CD4-positive, alpha-beta memory T cell (primary cell): ENCODE measurements at regions of chr3 and their contacts with region 1.

Region 1: DNA sequence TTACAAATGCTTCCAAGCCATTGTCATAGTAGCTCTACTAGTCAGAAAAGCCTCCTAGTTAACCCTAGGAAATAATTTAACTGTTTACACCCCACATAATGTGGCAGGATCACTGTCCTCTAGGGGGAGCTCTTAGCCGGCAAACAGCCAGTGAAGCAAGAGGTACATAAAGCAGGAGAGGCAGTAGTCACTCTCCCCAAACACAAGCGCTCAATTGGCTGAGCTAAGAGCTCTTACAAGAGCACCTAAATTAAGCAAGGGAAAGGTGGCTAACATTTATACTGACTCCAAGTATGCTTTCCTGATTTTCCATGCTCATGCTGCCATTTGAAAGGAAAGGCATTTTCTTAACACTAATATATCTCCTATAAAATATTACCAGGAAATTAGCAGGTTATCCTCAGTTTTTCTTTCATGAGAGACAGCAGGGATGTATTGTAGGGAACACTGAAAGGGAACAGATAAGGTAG is 37.6 kb downstream of the NCEH1 start:
- DNase-seq: peak in 4 of 5 donors; percentile 40 to 48 (median 44)
- H3K4me3 ChIP-seq: no peak overlapping the region
- H3K4me3 Mint-ChIP-seq: no peak overlapping the region
- H3K27ac ChIP-seq: no peak overlapping the region
- H3K27ac Mint-ChIP-seq: no peak overlapping the region
- H3K4me1 ChIP-seq: no peaks in the 10 kb centered on the region
- H3K4me1 Mint-ChIP-seq: peaks cover 0 to 5% (median 3%) of the 10 kb centered on the region in 4 donors
- H3K27me3 ChIP-seq: no peaks in the 10 kb centered on the region
- H3K27me3 Mint-ChIP-seq: no peaks in the 10 kb centered on the region

Region 2: GRCh38 chr3:172332256-172333041 is 340.8 kb before region 1 on chr3:
- CTCF ChIA-PET with region 1: interaction called, 26 read pairs
- POLR2A ChIA-PET with region 1: no interaction called
- intact Hi-C with region 1: no loop called
- DNase-seq: peak; percentile 40 to 57 (median 47)
- H3K4me3 ChIP-seq: no peak overlapping the region
- H3K4me3 Mint-ChIP-seq: no peak overlapping the region
- H3K27ac ChIP-seq: no peak overlapping the region
- H3K27ac Mint-ChIP-seq: peak overlapping the region in 1 of 7 donors; percentile 15
- H3K4me1 ChIP-seq: no peaks in the 10 kb centered on the region
- H3K4me1 Mint-ChIP-seq: peaks cover 0 to 7% (median 3%) of the 10 kb centered on the region in 4 donors
- H3K27me3 ChIP-seq: no peaks in the 10 kb centered on the region
- H3K27me3 Mint-ChIP-seq: no peaks in the 10 kb centered on the region

Region 3: DNA sequence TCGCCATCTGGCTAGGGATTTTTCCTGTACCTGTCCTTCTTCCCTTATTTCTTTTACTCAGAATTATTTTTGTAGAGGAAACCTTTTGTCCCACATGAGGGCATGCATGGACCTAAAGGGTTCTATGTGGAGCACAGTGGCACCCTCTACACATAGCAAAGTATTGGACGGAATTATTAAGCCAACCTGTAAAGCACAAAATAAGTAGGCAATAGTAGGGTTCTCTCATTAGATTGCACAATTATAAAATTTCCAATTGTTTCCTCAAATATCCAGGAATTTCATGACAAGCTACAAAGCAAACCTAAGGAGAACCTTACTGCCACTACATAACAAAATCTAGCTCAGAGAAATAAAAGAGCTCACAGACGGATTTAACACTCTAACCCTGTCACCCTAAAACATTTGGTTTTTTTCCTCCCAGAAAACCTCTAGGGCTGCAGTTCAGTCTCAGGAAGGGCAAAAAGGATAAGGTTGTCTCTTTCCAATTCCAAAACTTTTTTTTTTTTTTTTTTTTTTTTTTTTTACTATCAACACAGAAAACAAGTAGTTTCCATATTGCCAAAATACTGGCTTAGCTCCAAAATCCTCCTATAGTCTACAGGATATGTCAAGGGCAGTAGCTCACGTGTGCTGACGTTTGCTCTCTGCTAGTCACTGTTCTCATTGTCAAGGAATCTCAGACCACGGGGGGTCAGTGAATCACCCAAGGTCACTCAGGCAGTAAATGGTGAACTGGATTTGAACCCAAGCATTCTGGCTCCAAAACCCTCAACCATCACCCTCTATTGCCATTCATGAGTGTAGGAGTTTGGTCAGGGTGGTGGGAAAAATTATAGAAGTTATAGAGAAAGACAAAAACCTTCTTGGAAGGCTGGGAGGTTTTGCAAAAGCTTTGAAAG is 14.7 kb before region 1 on chr3:
- CTCF ChIA-PET with region 1: interaction called, 63 read pairs
- POLR2A ChIA-PET with region 1: interaction called, 4 read pairs
- intact Hi-C with region 1: no loop called
- DNase-seq: no peak
- H3K4me3 ChIP-seq: no peak overlapping the region
- H3K4me3 Mint-ChIP-seq: no peak overlapping the region
- H3K27ac ChIP-seq: no peak overlapping the region
- H3K27ac Mint-ChIP-seq: peak overlapping the region in 1 of 7 donors; percentile 3
- H3K4me1 ChIP-seq: no peaks in the 10 kb centered on the region
- H3K4me1 Mint-ChIP-seq: peaks cover 12 to 40% (median 23%) of the 10 kb centered on the region in 4 donors
- H3K27me3 ChIP-seq: no peaks in the 10 kb centered on the region
- H3K27me3 Mint-ChIP-seq: no peaks in the 10 kb centered on the region

Region 4: DNA sequence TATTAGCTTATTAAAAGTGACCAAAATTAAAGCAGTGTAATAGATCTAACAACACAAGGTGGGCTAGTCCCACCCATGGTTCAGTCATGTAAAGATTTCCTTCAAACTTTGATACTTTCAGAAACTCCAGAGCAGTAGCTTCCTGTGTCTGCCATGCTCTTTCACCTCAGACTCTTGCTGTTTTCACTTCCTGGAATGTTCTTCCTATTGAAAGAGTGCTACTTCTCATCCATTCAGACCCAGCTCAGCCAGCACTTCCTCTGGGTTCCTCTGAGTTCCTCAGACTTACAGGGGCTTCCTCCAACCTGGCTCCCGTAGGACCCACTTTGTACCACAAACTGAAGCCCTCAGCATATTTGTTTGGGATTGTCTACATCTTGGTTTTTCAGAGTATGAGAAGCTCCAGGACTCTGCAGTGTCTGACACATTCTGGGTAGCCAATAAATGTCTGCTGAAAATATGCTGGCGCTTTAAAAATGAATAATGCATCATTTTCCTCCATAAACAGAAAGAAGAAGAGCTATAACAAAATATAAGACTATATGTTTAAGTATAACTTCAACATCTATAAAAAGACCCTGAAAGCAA is 19.6 kb after region 1 on chr3:
- CTCF ChIA-PET with region 1: interaction called, 21 read pairs
- POLR2A ChIA-PET with region 1: no interaction called
- intact Hi-C with region 1: no loop called
- DNase-seq: no peak
- H3K4me3 ChIP-seq: no peak overlapping the region
- H3K4me3 Mint-ChIP-seq: no peak overlapping the region
- H3K27ac ChIP-seq: no peak overlapping the region
- H3K27ac Mint-ChIP-seq: no peak overlapping the region
- H3K4me1 ChIP-seq: peaks cover 6% of the 10 kb centered on the region
- H3K4me1 Mint-ChIP-seq: peaks cover 3 to 13% (median 7%) of the 10 kb centered on the region in 4 donors
- H3K27me3 ChIP-seq: no peaks in the 10 kb centered on the region
- H3K27me3 Mint-ChIP-seq: no peaks in the 10 kb centered on the region

Region 5: GRCh38 chr3:172750368-172751174 is 77.3 kb after region 1 on chr3 and contains the start of gene ECT2:
- CTCF ChIA-PET with region 1: interaction called, 4 read pairs
- POLR2A ChIA-PET with region 1: interaction called, 3 read pairs
- intact Hi-C with region 1: loop called (anchors 1 kb)
- DNase-seq: peak; percentile 94 to 99 (median 97)
- H3K4me3 ChIP-seq: peak within 1 kb of the TSS; percentile 73 to 76
- H3K4me3 Mint-ChIP-seq: peak within 1 kb of the TSS; percentile 94 to 99 (median 98)
- H3K27ac ChIP-seq: peak within 1 kb of the TSS; percentile 65
- H3K27ac Mint-ChIP-seq: peak within 1 kb of the TSS; percentile 84 to 96 (median 94)
- H3K4me1 ChIP-seq: peaks cover 26% of the 10 kb centered on the region
- H3K4me1 Mint-ChIP-seq: peaks cover 19 to 38% (median 27%) of the 10 kb centered on the region in 4 donors
- H3K27me3 ChIP-seq: no peaks in the 10 kb centered on the region
- H3K27me3 Mint-ChIP-seq: no peaks in the 10 kb centered on the region
- total RNA-seq, gene ECT2: 2.4 to 2.9 TPM